Mammary epithelial cell (primary cell): ENCODE measurements at regions of chr7 and their contacts with region 1.

Region 1: DNA sequence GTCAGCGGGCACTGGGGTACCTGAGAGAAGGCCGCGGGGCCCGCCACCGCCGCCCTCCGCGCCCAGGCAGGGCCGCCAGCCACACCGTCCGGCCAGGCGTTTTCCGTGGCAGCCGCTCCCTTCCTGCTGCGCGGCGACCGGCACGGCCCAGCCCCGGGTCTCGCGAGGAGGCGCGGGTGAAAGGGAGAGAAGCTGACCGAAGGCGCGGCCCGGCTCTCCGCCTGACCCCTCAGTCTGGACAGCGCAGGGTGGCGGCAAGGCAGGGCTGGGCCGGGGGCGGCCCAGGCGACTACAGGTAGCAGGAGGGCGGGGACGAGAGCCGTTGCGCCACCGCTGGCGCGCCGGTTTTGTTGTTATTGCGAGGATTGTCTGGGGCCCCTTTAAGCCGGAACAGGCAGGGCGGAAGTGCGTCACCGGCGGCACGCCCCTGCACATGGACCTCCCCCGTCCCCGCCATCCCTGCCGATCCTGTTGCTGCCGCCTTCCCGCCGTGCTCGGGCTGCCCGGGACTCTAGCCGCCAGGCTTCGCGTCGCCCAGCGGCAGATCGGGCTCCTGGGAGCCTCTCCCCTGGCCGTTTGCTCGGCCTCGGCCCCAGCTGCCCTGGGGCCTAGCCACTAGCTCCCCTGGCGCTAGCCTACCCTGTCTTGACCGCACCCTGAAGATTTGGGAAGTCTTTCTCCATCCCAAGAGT is at the start of gene HERPUD2:
- DNase-seq: peak; percentile 90
- H3K4me3 ChIP-seq: peak within 1 kb of the TSS; percentile 83 to 89 (median 87)
- H3K27ac ChIP-seq: peak within 1 kb of the TSS; percentile 89
- H3K4me1 ChIP-seq: peaks cover 25% of the 10 kb centered on the region
- H3K27me3 ChIP-seq: no peaks in the 10 kb centered on the region
- CTCF ChIP-seq: no peak
- total RNA-seq, gene HERPUD2: 28.7 to 42.2 TPM

Region 2: GRCh38 chr7:35891004-35891830 is 196.3 kb after region 1 on chr7:
- CTCF ChIA-PET with region 1: interaction called, 16 read pairs
- dilution Hi-C with region 1: no loop called
- in situ Hi-C with region 1: no loop called
- intact Hi-C with region 1: no loop called
- DNase-seq: no peak
- H3K4me3 ChIP-seq: no peak overlapping the region
- H3K27ac ChIP-seq: no peak overlapping the region
- H3K4me1 ChIP-seq: no peaks in the 10 kb centered on the region
- H3K27me3 ChIP-seq: no peaks in the 10 kb centered on the region
- CTCF ChIP-seq: no peak

Region 3: GRCh38 chr7:36152756-36153570 is 458.0 kb after region 1 on chr7 and contains the start of gene EEPD1:
- CTCF ChIA-PET with region 1: no interaction called
- dilution Hi-C with region 1: no loop called
- in situ Hi-C with region 1: no loop called
- intact Hi-C with region 1: loop called (anchors 10 kb)
- DNase-seq: peak; percentile 99
- H3K4me3 ChIP-seq: peak within 1 kb of the TSS; percentile 67 to 79 (median 74)
- H3K27ac ChIP-seq: peak within 1 kb of the TSS; percentile 24
- H3K4me1 ChIP-seq: peaks cover 18% of the 10 kb centered on the region
- H3K27me3 ChIP-seq: no peaks in the 10 kb centered on the region
- CTCF ChIP-seq: no peak
- total RNA-seq, gene EEPD1: 1.9 to 2.0 TPM